Mucosa of descending colon (tissue), 3 donors: ENCODE measurements at regions of chr3 and their contacts with region 1.

Region 1: GRCh38 chr3:134212906-134213665 is 37.6 kb downstream of the RYK start:
- DNase-seq: peak in 2 of 3 donors; percentile 86 to 96
- ATAC-seq: peak; percentile 95
- H3K4me3 ChIP-seq: no peak overlapping the region
- H3K4me1 ChIP-seq: no peaks in the 10 kb centered on the region
- CTCF ChIP-seq: peak; percentile 91

Region 2: DNA sequence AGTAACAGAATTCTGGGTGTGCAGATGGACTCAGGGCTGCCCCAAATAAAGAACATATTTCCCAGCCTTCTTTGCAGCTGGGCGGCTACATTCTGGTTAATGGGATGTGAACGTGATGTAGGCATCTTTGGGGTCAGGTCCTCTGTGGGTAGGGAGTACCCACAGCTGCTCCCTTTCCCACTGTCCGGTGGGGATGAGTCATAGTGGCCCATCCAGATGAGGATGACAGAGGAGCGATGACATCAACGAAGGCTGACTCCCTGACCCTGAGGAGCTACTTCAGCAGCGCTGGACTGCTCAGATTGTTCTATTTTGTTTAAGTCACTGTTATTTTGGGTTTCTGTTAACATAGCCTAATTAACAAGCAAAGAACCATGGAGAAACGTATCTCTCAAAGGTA is 369.5 kb before region 1 on chr3:
- intact Hi-C with region 1: no loop called
- DNase-seq: no peak
- ATAC-seq: no peak
- H3K4me3 ChIP-seq: no peak overlapping the region
- H3K4me1 ChIP-seq: no peaks in the 10 kb centered on the region
- CTCF ChIP-seq: no peak

Region 3: DNA sequence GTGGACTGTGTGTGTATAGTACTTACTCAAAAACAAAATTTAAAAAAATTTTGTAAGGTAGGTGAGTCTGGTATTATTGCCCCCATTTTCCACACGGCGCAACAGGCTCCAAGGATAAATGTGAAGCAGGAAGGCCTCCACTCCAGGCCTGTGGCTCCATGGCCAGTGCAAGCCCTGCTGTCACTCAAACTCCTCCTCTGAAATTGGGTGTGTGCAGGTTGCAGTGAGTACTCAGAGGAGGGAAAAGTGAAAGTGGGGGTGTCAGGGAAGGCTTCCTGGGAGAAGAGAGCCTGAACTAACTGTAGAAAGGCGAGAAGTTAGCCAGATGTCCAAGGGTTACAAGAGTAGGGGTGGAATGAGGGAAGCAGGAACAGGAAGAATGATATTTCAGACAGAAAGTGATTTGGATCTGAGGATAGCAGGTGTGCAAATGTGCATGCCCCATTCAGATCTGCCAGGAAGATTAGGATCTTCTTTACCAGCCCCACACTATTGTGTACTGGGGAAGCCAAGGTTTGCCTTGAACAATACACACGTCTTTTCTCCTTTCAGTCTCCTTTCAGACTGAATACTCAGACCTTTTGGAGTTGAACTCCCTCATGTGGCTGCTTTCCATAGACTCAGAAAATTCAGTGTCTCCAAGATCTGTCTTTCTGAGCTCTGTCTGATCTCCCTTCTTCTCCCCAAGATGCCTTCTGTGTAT is 86.2 kb after region 1 on chr3:
- intact Hi-C with region 1: loop called (anchors 5 kb)
- DNase-seq: peak in 2 of 3 donors; percentile 27 to 34
- ATAC-seq: peak; percentile 91
- H3K4me3 ChIP-seq: no peak overlapping the region
- H3K4me1 ChIP-seq: no peaks in the 10 kb centered on the region
- CTCF ChIP-seq: no peak

Region 4: GRCh38 chr3:134473868-134474546 is 260.9 kb after region 1 on chr3:
- intact Hi-C with region 1: loop called (anchors 10 kb)
- DNase-seq: peak in 2 of 3 donors; percentile 33 to 96
- ATAC-seq: peak; percentile 85
- H3K4me3 ChIP-seq: no peak overlapping the region
- H3K4me1 ChIP-seq: no peaks in the 10 kb centered on the region
- CTCF ChIP-seq: peak; percentile 44